Dorsolateral prefrontal cortex (tissue), 120 donors: ENCODE measurements at regions of chr1 and their contacts with region 1.

Region 1: GRCh38 chr1:26472901-26473845 is 933 bp downstream of the HMGN2 start:
- DNase-seq: peak; percentile 94 to 99 (median 96)
- H3K4me3 ChIP-seq: peak overlapping the region; percentile 55 to 100 (median 96)
- H3K27ac ChIP-seq: peak overlapping the region; percentile 97 to 100 (median 100)
- H3K27me3 ChIP-seq: no peaks in the 10 kb centered on the region
- CTCF ChIP-seq: peak in 20 of 56 donors; percentile 9 to 44 (median 21)

Region 2: GRCh38 chr1:26431979-26432695 is 41.0 kb before region 1 on chr1 and contains the start of gene DHDDS:
- intact Hi-C with region 1: loop called (anchors 2 kb)
- DNase-seq: peak; percentile 95 to 99 (median 98)
- H3K4me3 ChIP-seq: peak within 1 kb of the TSS; percentile 54 to 98 (median 82)
- H3K27ac ChIP-seq: peak within 1 kb of the TSS in 58 of 59 donors; percentile 22 to 88 (median 78)
- H3K27me3 ChIP-seq: no peaks in the 10 kb centered on the region
- CTCF ChIP-seq: peak in 31 of 56 donors; percentile 6 to 65 (median 34)
- total RNA-seq, gene DHDDS: 32.0 to 72.7 (median 50.8) TPM

Region 3: DNA sequence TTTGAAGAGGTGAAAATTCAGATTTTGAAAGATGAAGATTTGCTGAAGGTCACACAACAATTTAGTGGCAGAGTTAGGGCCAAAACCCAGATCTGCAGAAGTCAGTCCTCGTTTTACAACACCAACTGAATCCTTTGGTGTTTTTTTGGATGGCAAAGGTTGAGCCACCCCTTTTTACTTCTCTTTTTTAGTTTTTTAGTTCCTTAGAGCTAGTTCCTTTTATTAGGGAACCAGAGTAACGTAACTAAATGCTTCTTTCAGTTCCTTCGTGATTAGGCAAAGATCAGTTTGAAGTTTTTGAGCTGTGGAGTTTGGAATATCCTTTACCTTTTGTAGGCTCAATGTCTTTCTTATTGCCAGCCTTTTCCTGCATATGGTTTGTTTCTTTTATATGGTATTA is 154.8 kb after region 1 on chr1:
- intact Hi-C with region 1: no loop called
- DNase-seq: no peak
- H3K4me3 ChIP-seq: no peak overlapping the region
- H3K27ac ChIP-seq: peak overlapping the region in 3 of 59 donors; percentile 25 to 61 (median 26)
- H3K27me3 ChIP-seq: no peaks in the 10 kb centered on the region
- CTCF ChIP-seq: no peak

Region 4: GRCh38 chr1:26723013-26723991 is 250.1 kb after region 1 on chr1:
- intact Hi-C with region 1: no loop called
- DNase-seq: peak; percentile 58 to 96 (median 77)
- H3K4me3 ChIP-seq: peak overlapping the region in 41 of 59 donors; percentile 1 to 48 (median 17)
- H3K27ac ChIP-seq: peak overlapping the region in 50 of 59 donors; percentile 0 to 77 (median 45)
- H3K27me3 ChIP-seq: no peaks in the 10 kb centered on the region
- CTCF ChIP-seq: peak in 8 of 56 donors; percentile 6 to 21 (median 8)